A673 (cell line): ENCODE measurements at regions of chr11 and their contacts with region 1.

Region 1: DNA sequence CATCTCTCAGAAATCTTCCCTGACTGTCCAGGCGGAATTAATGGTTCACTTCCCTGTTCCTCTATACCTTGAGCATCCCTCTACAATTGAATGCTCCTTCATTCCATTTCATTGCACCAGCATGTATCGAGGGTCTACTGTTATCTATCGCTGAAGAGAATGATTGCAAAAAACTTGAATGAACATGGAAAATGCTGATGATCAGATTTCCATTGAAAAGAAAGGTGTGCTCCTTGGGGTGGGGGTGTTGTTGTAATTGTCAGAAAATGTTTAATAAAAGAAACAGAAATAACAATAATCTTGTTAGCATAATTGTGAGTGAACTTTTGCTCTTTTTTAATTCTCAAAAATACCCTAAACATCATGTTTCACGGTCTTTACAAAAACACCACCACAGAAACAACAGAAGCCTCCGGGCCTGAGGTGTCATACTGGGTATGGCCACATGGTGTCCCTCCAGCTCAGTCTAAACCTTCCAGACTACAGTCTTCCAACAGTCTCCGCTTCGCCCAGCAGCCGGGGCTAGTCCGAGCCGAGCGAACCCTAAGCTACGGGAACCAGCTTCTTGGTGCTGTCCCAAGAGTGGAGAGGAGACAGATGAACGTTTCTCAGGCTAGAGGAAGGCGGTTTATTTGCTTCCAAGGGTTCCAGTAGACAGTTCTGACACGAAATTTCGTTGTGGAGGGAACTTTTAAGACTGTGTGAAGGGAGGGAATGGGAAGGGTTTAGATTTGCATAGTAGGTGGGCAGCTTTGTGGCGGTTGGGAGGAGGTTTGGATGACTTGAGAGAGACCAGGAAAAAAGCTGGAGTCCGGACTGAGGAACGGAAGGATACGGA is 75.8 kb upstream of the ZBED5 start:
- DNase-seq: peak; percentile 92
- H3K4me3 ChIP-seq: peak overlapping the region; percentile 36
- H3K27ac ChIP-seq: no peak overlapping the region
- H3K4me1 ChIP-seq: no peaks in the 10 kb centered on the region
- H3K27me3 ChIP-seq: no peaks in the 10 kb centered on the region
- CTCF ChIP-seq: peak; percentile 92

Region 2: GRCh38 chr11:10792398-10792975 is 141.2 kb before region 1 on chr11:
- CTCF ChIA-PET with region 1: interaction called, 8 read pairs
- POLR2A ChIA-PET with region 1: no interaction called
- intact Hi-C with region 1: loop called (anchors 2 kb)
- DNase-seq: peak; percentile 74
- H3K4me3 ChIP-seq: peak overlapping the region; percentile 10
- H3K27ac ChIP-seq: no peak overlapping the region
- H3K4me1 ChIP-seq: no peaks in the 10 kb centered on the region
- H3K27me3 ChIP-seq: no peaks in the 10 kb centered on the region
- CTCF ChIP-seq: peak; percentile 91

Region 3: GRCh38 chr11:10857709-10858438 is 75.8 kb before region 1 on chr11 and contains the start of gene ZBED5:
- CTCF ChIA-PET with region 1: no interaction called
- POLR2A ChIA-PET with region 1: no interaction called
- intact Hi-C with region 1: loop called (anchors 5 kb)
- DNase-seq: peak; percentile 98
- H3K4me3 ChIP-seq: peak within 1 kb of the TSS; percentile 83
- H3K27ac ChIP-seq: peak within 1 kb of the TSS; percentile 92
- H3K4me1 ChIP-seq: peaks cover 10% of the 10 kb centered on the region
- H3K27me3 ChIP-seq: no peaks in the 10 kb centered on the region
- CTCF ChIP-seq: no peak
- total RNA-seq, gene ZBED5: 40.2 and 43.5 TPM in 2 replicates

Region 4: GRCh38 chr11:10955616-10956015 is 21.9 kb after region 1 on chr11:
- CTCF ChIA-PET with region 1: no interaction called
- POLR2A ChIA-PET with region 1: no interaction called
- intact Hi-C with region 1: no loop called
- DNase-seq: no peak
- H3K4me3 ChIP-seq: no peak overlapping the region
- H3K27ac ChIP-seq: no peak overlapping the region
- H3K4me1 ChIP-seq: no peaks in the 10 kb centered on the region
- H3K27me3 ChIP-seq: no peaks in the 10 kb centered on the region
- CTCF ChIP-seq: no peak

Region 5: GRCh38 chr11:11022125-11022730 is 88.6 kb after region 1 on chr11:
- CTCF ChIA-PET with region 1: interaction called, 12 read pairs
- POLR2A ChIA-PET with region 1: no interaction called
- intact Hi-C with region 1: loop called (anchors 1 kb)
- DNase-seq: peak; percentile 21
- H3K4me3 ChIP-seq: no peak overlapping the region
- H3K27ac ChIP-seq: no peak overlapping the region
- H3K4me1 ChIP-seq: no peaks in the 10 kb centered on the region
- H3K27me3 ChIP-seq: no peaks in the 10 kb centered on the region
- CTCF ChIP-seq: peak; percentile 52; the same call in 1 of the 2 replicates

Region 6: DNA sequence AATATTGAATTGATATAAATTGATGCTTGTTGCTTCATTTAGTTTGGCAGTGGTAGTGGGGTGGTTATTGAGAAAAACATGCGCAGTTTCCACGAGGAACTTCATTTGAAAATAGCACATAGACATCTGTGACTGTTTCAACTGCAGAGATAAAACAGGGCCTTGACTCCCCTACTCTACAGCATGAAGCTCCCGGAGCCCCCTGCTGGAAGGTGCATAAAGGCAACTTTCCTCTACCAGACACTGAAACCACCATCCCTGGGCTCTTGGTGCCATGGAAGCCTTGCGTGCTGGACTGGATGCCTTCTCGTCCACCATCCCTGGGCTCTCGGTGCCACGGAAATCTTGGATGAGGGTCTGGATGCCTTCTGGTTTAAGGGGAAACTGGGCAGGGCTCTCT is 223.5 kb after region 1 on chr11:
- CTCF ChIA-PET with region 1: no interaction called
- POLR2A ChIA-PET with region 1: no interaction called
- intact Hi-C with region 1: no loop called
- DNase-seq: peak; percentile 54
- H3K4me3 ChIP-seq: no peak overlapping the region
- H3K27ac ChIP-seq: no peak overlapping the region
- H3K4me1 ChIP-seq: no peaks in the 10 kb centered on the region
- H3K27me3 ChIP-seq: no peaks in the 10 kb centered on the region
- CTCF ChIP-seq: peak; percentile 55

Region 7: DNA sequence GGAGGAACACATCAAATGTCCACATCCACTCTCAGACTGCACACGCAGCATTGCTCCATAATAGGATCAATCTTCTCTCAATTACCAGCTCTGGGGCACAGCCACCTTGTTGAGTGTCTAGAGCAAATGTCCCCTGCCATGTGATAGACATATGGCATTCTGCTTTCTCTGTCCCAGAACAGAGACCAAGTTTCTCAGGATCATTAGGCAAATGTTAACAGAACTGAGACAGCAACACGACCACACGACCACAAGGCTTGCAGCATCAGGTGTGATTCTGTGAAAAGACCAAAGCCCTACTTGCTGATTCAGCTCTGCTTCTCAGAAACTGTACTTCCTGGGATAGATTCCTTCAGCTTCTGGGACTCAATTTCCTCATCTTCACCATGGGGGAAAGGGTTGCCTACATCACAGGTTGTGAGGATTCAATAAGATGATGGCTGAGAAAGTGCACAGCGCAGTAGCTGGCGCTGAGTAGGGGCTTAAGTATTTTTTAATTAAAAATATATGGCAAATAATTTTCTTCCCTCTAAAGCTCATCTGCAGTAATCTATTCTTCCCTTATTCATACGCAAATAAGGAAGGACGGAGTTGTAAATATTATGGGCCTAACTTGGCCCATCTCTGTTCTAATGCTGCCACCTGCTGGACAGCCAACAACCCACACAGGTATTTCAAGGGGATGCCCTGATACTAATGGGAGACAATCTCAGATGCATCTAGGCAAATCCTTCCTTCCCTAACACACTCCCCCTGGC is 853.8 kb after region 1 on chr11:
- CTCF ChIA-PET with region 1: interaction called, 8 read pairs
- POLR2A ChIA-PET with region 1: no interaction called
- intact Hi-C with region 1: loop called (anchors 1 kb)
- DNase-seq: peak; percentile 77
- H3K4me3 ChIP-seq: no peak overlapping the region
- H3K27ac ChIP-seq: no peak overlapping the region
- H3K4me1 ChIP-seq: no peaks in the 10 kb centered on the region
- H3K27me3 ChIP-seq: peaks cover 9% of the 10 kb centered on the region
- CTCF ChIP-seq: peak; percentile 80

Region 8: DNA sequence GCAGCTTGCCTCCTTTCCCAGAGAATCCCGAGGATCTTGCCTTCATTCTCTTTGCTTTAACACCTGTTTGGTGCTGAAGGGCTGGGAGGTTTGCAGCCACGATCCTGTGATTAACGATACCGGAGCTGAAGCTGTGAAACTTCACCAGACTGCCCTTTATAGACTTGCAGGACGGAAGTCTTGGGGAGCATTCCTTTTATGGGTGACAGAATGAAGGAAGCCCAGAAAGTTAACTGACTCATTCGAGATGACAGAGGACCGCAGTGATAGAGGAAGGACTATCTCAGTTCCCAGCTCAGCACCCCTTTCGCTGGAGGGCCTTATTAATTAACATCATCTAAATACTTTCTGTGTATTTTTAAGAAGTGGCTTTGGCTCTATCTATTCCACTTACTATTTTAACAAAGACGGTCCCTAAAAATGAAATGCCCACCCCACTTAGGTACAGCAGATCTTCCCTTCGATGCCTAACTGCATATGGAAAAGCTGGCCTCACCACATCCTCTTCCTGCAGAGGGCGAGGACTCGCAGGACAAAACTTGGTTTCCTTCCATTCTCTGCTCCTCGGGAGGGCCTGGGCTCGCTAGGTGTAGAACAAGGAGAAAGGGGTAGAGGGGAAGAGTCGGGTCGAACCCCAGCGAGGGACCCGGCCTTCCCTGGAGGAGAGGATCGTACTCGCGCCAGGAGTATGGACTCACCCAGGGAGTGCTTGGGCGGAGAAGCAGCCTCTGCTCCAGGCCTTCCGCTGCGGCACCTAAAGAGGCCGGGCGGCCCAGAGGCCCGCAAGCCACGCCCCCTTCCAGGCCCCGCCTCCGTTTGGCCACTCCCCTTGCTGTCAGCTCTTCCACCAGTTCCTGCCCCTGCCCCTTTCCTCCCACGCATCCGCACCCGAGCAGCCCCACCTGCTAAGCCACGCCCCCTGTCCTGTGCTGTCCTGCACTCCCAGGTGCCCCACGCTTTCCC is 877.4 kb after region 1 on chr11:
- CTCF ChIA-PET with region 1: no interaction called
- POLR2A ChIA-PET with region 1: no interaction called
- intact Hi-C with region 1: no loop called
- DNase-seq: no peak
- H3K4me3 ChIP-seq: no peak overlapping the region
- H3K27ac ChIP-seq: no peak overlapping the region
- H3K4me1 ChIP-seq: no peaks in the 10 kb centered on the region
- H3K27me3 ChIP-seq: no peaks in the 10 kb centered on the region
- CTCF ChIP-seq: no peak